Left colon (tissue), 2 donors: ENCODE measurements at regions of chr7 and their contacts with region 1.

Region 1: GRCh38 chr7:105014693-105015389 is 836 bp downstream of the KMT2E start:
- DNase-seq: peak; percentile 70 to 74
- ATAC-seq: peak; percentile 26

Region 2: DNA sequence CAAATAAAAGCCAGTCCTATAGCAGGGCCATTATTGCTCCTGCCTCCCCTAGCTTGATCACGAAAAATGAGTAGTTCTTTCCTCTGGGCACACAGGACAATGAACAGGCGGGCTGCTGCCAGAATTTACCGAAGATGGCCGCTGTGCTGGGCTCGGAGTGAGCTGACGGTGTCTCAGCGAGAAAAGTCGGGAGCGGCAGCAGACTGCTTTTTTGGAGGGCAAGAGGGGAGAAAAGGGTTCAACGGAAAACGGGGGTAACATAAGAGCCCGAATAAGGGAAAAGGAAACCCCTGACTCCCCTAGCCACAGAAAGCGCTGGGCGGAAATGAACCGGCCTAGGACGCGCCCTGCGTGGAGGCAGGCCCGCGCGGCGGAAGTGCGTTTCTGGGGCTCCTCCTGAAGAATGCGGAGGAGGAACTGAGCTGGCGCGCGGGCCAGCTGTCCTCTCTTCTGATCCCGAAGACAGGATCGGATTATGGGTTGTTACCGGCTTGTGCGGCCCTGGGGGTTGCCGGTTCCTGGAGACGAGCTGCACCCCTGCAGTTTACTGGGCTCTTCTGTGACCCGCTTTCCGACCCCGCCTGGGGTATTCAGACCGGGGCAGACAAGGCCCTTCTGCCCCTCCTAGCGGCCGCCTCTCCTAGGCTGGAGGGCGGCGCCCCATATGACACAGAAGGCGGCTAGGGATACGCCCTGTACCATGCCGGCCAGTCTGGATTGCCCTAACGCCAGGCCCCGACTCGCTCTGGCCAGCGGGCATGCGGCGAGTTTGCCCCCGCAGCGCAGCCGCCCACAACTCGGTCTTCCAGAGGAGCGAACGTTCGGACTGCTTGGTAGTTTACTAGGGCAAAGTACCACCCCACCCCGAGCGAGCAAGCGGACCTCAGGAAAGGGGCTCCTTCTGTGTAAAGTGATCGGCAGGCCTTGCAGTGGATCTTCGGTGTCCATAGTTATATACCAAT is 31.0 kb before region 1 on chr7:
- intact Hi-C with region 1: loop called in 1 of 2 experiments (anchors 5 kb)
- DNase-seq: peak; percentile 90 to 92
- ATAC-seq: peak; percentile 83